Activated CD4-positive, alpha-beta T cell treated with anti-CD3 and anti-CD28 coated beads for 36 hours (primary cell): ENCODE measurements at regions of chr9 and their contacts with region 1.

Region 1: DNA sequence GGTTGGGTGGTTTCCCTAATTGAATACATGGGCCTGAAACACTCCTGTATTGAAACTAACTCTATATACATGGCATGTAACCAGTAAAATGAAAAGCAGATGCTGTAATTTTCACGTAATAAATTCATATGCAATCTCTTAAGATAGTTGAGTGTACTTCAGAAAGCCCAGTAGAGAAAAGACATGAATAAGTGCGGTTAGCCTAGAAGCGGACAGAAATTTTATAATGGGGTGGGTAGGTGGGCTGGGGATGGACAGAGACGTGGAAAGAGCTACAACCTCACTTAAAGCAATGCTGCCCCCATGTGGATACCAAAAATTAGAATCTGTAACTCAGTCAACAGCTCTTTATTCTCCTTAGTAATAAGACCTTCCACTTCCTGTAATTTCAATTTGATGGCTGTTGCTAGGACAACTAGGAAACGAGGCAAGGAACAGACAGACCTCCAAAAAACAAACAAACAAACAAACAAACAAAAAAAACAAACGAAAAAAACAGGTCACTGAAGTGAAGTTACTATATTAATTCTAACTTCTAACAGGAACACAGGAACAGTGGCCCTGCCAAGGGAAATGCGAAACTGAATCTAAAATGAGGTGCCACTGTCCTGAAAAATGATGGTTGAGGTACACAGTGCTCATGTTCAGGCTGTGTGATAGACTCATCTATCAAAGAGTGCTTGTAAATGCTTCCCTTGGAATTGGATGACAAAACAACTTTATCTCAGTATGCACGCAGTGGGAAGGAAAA is 103.4 kb upstream of the GNA14 start:
- DNase-seq: peak; percentile 34
- ATAC-seq: peak; percentile 71
- H3K4me3 Mint-ChIP-seq: no peak overlapping the region
- H3K27ac Mint-ChIP-seq: peak overlapping the region; percentile 52
- H3K4me1 Mint-ChIP-seq: peaks cover 39% of the 10 kb centered on the region
- H3K27me3 Mint-ChIP-seq: no peaks in the 10 kb centered on the region

Region 2: DNA sequence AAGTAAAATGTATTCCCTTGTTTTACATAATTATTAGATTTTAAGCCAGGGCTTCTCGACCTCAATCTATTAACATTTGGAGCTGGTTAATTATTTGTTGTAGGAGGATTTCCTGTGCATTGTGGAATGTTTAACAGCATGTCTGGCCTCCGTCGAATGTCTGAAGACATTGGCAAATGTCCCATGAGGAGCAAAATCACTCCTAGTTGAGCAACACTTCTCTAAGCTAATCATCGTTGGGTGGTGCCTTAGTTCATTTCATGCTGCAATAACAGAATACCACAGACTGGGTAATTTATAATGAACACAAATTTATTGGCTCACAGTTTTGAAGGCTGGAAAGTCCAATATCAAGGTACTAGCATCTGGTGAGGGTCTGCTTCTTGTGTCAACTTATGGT is 587.6 kb before region 1 on chr9:
- CTCF ChIA-PET with region 1: interaction called, 3 read pairs
- POLR2A ChIA-PET with region 1: no interaction called
- intact Hi-C with region 1: loop called (anchors 5 kb)
- DNase-seq: no peak
- ATAC-seq: no peak
- H3K4me3 Mint-ChIP-seq: no peak overlapping the region
- H3K27ac Mint-ChIP-seq: no peak overlapping the region
- H3K4me1 Mint-ChIP-seq: peaks cover 1% of the 10 kb centered on the region
- H3K27me3 Mint-ChIP-seq: peaks cover 4% of the 10 kb centered on the region

Region 3: GRCh38 chr9:77648234-77649120 is 103.0 kb before region 1 on chr9 and contains the start of gene GNA14:
- CTCF ChIA-PET with region 1: interaction called, 7 read pairs
- POLR2A ChIA-PET with region 1: no interaction called
- intact Hi-C with region 1: loop called in 1 of 2 experiments (anchors 5 kb)
- DNase-seq: peak; percentile 46
- ATAC-seq: peak; percentile 23
- H3K4me3 Mint-ChIP-seq: peak within 1 kb of the TSS; percentile 65
- H3K27ac Mint-ChIP-seq: no peak within 1 kb of the TSS
- H3K4me1 Mint-ChIP-seq: peaks cover 11% of the 10 kb centered on the region
- H3K27me3 Mint-ChIP-seq: peaks cover 38% of the 10 kb centered on the region
- total RNA-seq, gene GNA14: 0.11 to 0.54 TPM

Region 4: DNA sequence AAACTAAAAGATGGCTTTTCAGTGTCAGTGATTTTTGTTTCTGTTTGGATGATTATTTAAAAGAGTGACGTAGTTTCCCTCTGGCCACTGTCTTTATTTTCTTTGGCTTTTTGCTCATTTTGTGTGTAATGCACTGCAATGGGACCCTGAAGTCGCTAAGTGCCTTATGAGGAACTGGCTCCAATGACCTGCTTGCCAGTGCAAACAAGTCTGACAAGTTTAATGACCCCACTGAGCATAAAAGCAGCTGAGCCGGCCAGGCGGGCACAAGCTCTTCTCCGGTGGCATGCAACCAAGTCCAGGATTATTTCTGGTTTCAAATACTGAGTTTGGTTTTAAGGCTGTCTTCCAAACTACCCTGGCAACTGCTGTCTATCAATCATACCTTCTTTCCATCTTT is 87.8 kb before region 1 on chr9:
- CTCF ChIA-PET with region 1: interaction called, 3 read pairs
- POLR2A ChIA-PET with region 1: no interaction called
- intact Hi-C with region 1: loop called (anchors 1 to 5 kb)
- DNase-seq: no peak
- ATAC-seq: no peak
- H3K4me3 Mint-ChIP-seq: no peak overlapping the region
- H3K27ac Mint-ChIP-seq: no peak overlapping the region
- H3K4me1 Mint-ChIP-seq: no peaks in the 10 kb centered on the region
- H3K27me3 Mint-ChIP-seq: peaks cover 6% of the 10 kb centered on the region

Region 5: DNA sequence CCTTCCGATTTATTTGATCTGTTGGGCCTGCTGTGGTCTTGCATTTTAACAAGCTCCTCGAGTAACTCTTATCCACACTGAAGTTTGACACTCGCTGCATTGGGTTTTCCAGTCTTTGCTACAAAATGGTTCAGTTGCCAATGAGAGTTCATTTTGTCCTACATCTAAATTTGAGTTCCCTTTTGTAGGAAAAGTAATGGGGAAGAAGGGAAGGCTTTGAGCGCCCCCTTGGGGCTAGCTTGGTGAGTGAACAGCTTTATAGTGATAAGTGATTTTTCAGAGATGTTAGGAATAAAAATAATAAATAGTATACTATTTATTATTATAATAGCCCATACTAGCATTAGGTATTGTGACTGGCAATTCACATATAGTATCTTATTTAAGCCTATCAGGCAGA is 370.0 kb after region 1 on chr9:
- CTCF ChIA-PET with region 1: interaction called, 3 read pairs
- POLR2A ChIA-PET with region 1: no interaction called
- intact Hi-C with region 1: loop called in 1 of 2 experiments (anchors 5 kb)
- DNase-seq: peak; percentile 79
- ATAC-seq: no peak
- H3K4me3 Mint-ChIP-seq: no peak overlapping the region
- H3K27ac Mint-ChIP-seq: no peak overlapping the region
- H3K4me1 Mint-ChIP-seq: peaks cover 37% of the 10 kb centered on the region
- H3K27me3 Mint-ChIP-seq: no peaks in the 10 kb centered on the region